ENCODE measurements at regions of chr11 and their contacts with region 1.

Region 1: DNA sequence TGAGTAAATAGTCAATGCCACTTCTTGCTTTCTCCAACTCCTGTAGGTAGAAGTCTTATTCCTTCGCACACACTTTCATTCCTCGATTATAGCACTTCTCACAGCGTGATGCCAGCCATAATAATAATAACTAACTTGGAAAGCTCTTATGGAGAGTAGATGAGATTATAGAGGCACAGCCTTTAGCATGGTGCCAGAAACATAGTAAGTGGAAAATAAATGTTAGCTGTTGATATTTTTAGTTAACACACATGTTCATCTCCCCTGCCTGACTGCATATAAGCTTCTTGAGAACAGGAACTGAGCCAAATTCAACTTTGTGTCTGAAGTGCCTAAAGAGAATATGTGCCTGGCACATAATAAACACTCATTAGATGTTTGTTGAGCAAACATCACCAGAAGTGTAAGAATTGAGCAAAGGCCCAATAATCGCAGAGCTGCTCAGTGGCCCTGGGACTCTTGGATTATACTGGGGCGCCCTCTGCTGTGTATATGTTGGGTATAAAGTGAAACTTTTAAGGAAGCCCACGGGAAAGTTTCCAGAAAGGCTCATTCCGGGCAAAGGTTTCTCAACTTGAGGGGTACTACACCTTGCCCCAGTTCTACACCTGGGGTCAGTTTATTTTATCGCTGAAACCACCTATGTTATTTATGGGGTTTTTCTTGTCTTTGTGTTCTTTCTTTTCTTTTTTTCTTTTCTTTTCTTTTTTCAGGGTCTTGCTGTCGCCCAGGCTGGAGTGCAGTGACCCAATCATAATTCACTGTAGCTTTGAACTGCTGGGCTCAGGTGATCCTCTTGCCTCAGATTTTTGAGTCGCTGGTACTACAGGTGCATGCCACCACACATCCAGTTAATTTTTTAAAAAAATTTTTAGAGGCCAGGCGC is 22.3 kb downstream of the SLN start:
- DNase-seq: no peak
- H3K4me3 ChIP-seq: no peak overlapping the region
- H3K27ac ChIP-seq: no peak overlapping the region
- H3K4me1 ChIP-seq: peaks cover 0 to 10% (median 0%) of the 10 kb centered on the region in 3 donors
- H3K27me3 ChIP-seq: no peaks in the 10 kb centered on the region
- CTCF ChIP-seq: peak; percentile 17 to 73 (median 60)
- POLR2A ChIP-seq: no peak

Region 2: GRCh38 chr11:107565219-107565937 is 124.2 kb before region 1 on chr11 and contains the start of gene ALKBH8:
- intact Hi-C with region 1: loop called (anchors 10 kb)
- DNase-seq: peak; percentile 21
- H3K4me3 ChIP-seq: peak within 1 kb of the TSS; percentile 72 to 88 (median 85)
- H3K27ac ChIP-seq: peak within 1 kb of the TSS; percentile 83 to 93 (median 89)
- H3K4me1 ChIP-seq: peaks cover 19 to 48% (median 25%) of the 10 kb centered on the region in 3 donors
- H3K27me3 ChIP-seq: peaks cover 0 to 8% (median 0%) of the 10 kb centered on the region in 4 donors
- CTCF ChIP-seq: no peak
- POLR2A ChIP-seq: no peak
- total RNA-seq, gene ALKBH8: 2.3 to 9.3 (median 6.9) TPM

Measured in esophagus squamous epithelium (tissue), 5 donors.